ENCODE measurements at regions of chr14 and their contacts with region 1.

Region 1: GRCh38 chr14:31400031-31400638 is 20.2 kb downstream of the HEATR5A start:
- DNase-seq: no peak
- H3K4me3 Mint-ChIP-seq: peak overlapping the region; percentile 17
- H3K27ac Mint-ChIP-seq: peak overlapping the region; percentile 72
- H3K4me1 Mint-ChIP-seq: peaks cover 32% of the 10 kb centered on the region
- H3K27me3 Mint-ChIP-seq: no peaks in the 10 kb centered on the region

Region 2: DNA sequence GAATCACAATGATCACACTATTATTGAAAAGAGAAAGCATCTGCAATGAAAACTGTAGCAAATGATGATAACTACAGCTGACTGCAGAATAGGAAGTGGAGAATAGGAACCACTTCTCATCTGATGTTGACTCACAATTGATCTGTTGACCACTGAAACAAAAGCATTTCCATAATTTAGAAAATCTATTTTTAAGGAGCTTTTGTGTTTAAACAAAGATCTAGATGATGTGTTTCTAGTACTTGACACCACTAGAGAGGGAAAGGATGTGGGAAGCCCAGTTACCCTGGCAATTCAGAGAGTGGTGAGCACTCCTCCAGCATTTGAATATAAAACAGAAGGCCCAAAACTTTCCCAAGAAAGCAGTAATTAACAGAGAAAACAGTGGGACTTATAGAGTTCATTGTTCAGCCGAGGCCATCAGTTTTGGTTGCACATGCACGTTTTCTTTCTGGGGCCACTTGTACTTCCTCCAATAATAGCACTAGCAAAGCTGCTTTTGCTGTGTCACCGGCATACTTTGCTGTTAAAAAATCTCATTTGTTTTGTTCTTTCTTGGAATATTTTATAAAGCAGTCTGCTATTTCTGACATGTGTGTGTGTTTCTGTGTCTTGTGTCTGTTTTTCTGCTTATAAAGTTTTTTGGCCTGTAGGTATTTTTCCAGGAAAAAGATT is 116.4 kb before region 1 on chr14:
- intact Hi-C with region 1: no loop called
- DNase-seq: no peak
- H3K4me3 Mint-ChIP-seq: no peak overlapping the region
- H3K27ac Mint-ChIP-seq: no peak overlapping the region
- H3K4me1 Mint-ChIP-seq: no peaks in the 10 kb centered on the region
- H3K27me3 Mint-ChIP-seq: no peaks in the 10 kb centered on the region

Region 3: GRCh38 chr14:31380106-31380505 is 20.0 kb before region 1 on chr14:
- intact Hi-C with region 1: loop called (anchors 1 kb)
- DNase-seq: no peak
- H3K4me3 Mint-ChIP-seq: no peak overlapping the region
- H3K27ac Mint-ChIP-seq: no peak overlapping the region
- H3K4me1 Mint-ChIP-seq: peaks cover 12% of the 10 kb centered on the region
- H3K27me3 Mint-ChIP-seq: no peaks in the 10 kb centered on the region

Region 4: DNA sequence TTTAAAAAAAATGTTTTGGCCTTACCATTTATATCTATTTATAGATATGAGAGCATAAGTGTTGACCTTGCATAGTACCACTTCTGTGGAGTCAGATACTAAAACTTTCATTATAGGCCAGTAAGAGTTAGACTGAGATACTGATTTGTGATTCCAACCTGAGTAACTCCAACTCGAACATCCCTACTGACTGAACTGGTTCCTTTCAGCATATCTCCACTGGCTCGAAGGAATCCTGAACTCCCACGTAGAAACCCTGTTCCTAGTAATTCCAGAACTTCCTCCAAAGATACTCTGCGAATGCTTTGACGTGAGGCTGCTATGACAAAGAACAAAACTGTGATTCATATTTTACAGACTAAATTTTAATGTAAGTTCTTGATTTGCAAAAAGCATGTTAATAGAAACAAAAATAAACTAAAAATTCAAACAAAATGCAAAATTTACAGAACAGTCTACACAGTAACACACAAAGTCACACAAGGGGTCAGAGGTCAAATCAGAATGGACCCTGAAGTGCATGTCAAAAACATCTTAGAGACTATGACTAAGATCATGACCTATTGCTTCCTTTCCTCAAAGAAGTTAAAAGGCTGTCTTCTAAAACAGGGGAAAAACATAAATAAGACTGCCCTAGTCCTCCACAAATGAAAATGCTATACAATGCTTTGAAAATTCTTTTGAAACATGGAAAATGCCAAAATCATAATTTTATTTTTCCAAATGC is 11.3 kb before region 1 on chr14:
- intact Hi-C with region 1: loop called (anchors 1 kb)
- DNase-seq: no peak
- H3K4me3 Mint-ChIP-seq: peak overlapping the region; percentile 7
- H3K27ac Mint-ChIP-seq: peak overlapping the region; percentile 93
- H3K4me1 Mint-ChIP-seq: peaks cover 41% of the 10 kb centered on the region
- H3K27me3 Mint-ChIP-seq: no peaks in the 10 kb centered on the region

Region 5: DNA sequence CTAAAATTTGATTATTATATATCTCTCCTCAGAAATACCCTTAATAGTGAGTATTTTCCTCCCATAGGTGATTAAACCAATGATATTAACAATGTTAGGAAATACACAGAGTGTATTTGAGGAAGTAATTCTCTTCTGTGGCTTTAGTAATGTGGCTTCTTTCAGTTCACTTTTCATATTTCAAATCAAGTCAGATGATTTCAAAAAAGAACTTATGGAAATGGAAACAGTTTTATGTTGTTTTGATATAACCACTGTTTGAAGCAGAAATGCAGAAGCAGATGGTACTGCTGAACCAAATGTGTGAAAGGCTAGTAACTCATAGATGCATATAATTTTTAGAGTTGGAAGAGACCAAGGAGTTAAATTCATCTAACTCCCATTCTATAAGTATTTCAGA is 89.6 kb after region 1 on chr14:
- intact Hi-C with region 1: no loop called
- DNase-seq: no peak
- H3K4me3 Mint-ChIP-seq: no peak overlapping the region
- H3K27ac Mint-ChIP-seq: no peak overlapping the region
- H3K4me1 Mint-ChIP-seq: no peaks in the 10 kb centered on the region
- H3K27me3 Mint-ChIP-seq: no peaks in the 10 kb centered on the region